ENCODE measurements at regions of chr1 and their contacts with region 1.

Region 1: GRCh38 chr1:116737020-116737854 is 17.0 kb upstream of the CD2 start:
- DNase-seq: peak; percentile 82 to 85 (median 83)
- H3K4me3 ChIP-seq: peak overlapping the region in 1 of 2 donors; percentile 44
- H3K4me3 Mint-ChIP-seq: peak overlapping the region; percentile 50 to 80 (median 74)
- H3K27ac ChIP-seq: peak overlapping the region; percentile 97
- H3K27ac Mint-ChIP-seq: peak overlapping the region; percentile 97 to 100 (median 99)
- H3K4me1 ChIP-seq: peaks cover 49% of the 10 kb centered on the region
- H3K4me1 Mint-ChIP-seq: peaks cover 41 to 55% (median 46%) of the 10 kb centered on the region in 4 donors
- H3K27me3 ChIP-seq: no peaks in the 10 kb centered on the region
- H3K27me3 Mint-ChIP-seq: no peaks in the 10 kb centered on the region

Region 2: DNA sequence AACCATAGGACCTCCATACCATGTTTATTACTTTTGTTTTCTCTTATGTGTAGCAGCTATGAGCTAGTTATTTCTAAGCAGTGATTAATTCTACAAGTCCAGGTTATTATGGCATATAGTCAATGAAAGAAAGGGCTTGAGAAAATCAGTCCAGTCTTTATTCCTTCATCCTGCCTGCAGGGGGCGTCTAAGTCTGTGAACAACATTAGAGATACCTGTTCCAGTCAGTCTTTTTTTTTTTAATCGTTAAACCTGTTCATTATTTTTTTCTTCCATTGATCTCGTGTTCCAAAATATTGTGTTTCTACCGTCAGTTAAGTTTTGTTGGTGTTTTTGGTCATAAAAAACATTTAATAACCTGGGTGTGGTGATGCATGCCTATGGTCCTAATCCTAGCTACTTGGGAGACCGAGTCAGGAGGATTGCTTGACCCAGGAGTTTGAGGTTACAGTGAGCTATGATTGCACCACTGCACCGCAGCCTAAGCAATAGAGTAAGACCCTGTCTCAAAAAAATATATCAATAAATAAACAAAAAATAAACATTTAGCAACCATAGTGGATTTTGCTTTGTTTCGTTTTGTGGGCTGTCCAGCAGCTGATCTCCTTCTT is 12.4 kb before region 1 on chr1:
- CTCF ChIA-PET with region 1: interaction called, 46 read pairs
- POLR2A ChIA-PET with region 1: interaction called, 7 read pairs
- intact Hi-C with region 1: loop called (anchors 1 kb)
- DNase-seq: peak; percentile 67 to 81 (median 73)
- H3K4me3 ChIP-seq: no peak overlapping the region
- H3K4me3 Mint-ChIP-seq: no peak overlapping the region
- H3K27ac ChIP-seq: no peak overlapping the region
- H3K27ac Mint-ChIP-seq: peak overlapping the region in 3 of 7 donors; percentile 1 to 47 (median 39)
- H3K4me1 ChIP-seq: peaks cover 13% of the 10 kb centered on the region
- H3K4me1 Mint-ChIP-seq: peaks cover 6 to 27% (median 12%) of the 10 kb centered on the region in 4 donors
- H3K27me3 ChIP-seq: no peaks in the 10 kb centered on the region
- H3K27me3 Mint-ChIP-seq: no peaks in the 10 kb centered on the region

Region 3: GRCh38 chr1:116763787-116764465 is 26.7 kb after region 1 on chr1:
- CTCF ChIA-PET with region 1: interaction called, 170 read pairs
- POLR2A ChIA-PET with region 1: interaction called, 1,832 read pairs
- intact Hi-C with region 1: loop called (anchors 1 kb)
- DNase-seq: peak in 3 of 5 donors; percentile 39 to 80 (median 43)
- H3K4me3 ChIP-seq: peak overlapping the region; percentile 10 to 27
- H3K4me3 Mint-ChIP-seq: peak overlapping the region; percentile 76 to 94 (median 84)
- H3K27ac ChIP-seq: peak overlapping the region; percentile 88
- H3K27ac Mint-ChIP-seq: peak overlapping the region; percentile 97 to 99 (median 98)
- H3K4me1 ChIP-seq: peaks cover 97% of the 10 kb centered on the region
- H3K4me1 Mint-ChIP-seq: peaks cover 79 to 100% (median 88%) of the 10 kb centered on the region in 4 donors
- H3K27me3 ChIP-seq: no peaks in the 10 kb centered on the region
- H3K27me3 Mint-ChIP-seq: no peaks in the 10 kb centered on the region

Region 4: DNA sequence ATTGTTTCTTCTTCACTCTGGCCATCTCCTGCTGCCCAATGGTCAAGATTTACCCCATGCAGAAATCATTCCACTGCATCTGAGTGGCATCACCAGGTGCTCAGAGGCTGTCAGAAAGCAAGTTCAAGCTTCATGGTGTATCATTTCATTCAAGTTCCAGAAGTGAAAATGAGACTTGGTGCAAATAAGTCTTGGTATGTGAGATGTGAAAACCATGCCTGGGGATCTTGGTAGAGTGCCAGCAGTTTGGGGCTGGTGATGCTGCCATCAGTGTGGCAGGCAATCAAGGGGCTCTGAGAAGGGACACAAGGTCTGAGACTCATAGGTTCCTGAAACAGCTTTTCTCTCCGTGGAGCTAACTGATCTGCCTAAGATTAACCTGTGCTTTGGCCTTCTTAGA is 69.0 kb after region 1 on chr1:
- CTCF ChIA-PET with region 1: interaction called, 27 read pairs
- POLR2A ChIA-PET with region 1: interaction called, 170 read pairs
- intact Hi-C with region 1: loop called (anchors 2 kb)
- DNase-seq: peak in 4 of 5 donors; percentile 57 to 79 (median 58)
- H3K4me3 ChIP-seq: peak overlapping the region in 1 of 2 donors; percentile 29
- H3K4me3 Mint-ChIP-seq: peak overlapping the region; percentile 67 to 96 (median 85)
- H3K27ac ChIP-seq: peak overlapping the region; percentile 80
- H3K27ac Mint-ChIP-seq: peak overlapping the region; percentile 89 to 99 (median 98)
- H3K4me1 ChIP-seq: peaks cover 97% of the 10 kb centered on the region
- H3K4me1 Mint-ChIP-seq: peaks cover 78 to 97% (median 84%) of the 10 kb centered on the region in 4 donors
- H3K27me3 ChIP-seq: no peaks in the 10 kb centered on the region
- H3K27me3 Mint-ChIP-seq: no peaks in the 10 kb centered on the region

Region 5: DNA sequence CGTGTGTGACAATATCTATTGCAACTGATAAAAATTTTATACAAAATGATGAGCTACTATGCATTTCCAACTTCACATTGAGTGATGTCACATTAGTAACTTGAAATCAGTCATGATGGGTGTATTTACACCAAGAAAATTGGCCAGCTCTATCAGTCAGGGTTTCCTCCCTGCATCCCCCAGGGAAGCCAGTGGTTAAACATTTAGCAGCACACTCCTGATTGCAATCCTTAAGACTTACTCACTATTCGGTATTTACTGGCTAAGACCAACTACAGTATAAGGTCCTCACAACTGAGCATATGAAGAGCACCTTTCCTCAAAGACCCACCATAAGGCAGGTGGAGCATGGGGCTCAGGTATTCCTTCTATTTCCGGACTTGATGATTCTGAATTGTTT is 131.1 kb after region 1 on chr1:
- CTCF ChIA-PET with region 1: no interaction called
- POLR2A ChIA-PET with region 1: no interaction called
- intact Hi-C with region 1: no loop called
- DNase-seq: no peak
- H3K4me3 ChIP-seq: no peak overlapping the region
- H3K4me3 Mint-ChIP-seq: no peak overlapping the region
- H3K27ac ChIP-seq: no peak overlapping the region
- H3K27ac Mint-ChIP-seq: no peak overlapping the region
- H3K4me1 ChIP-seq: no peaks in the 10 kb centered on the region
- H3K4me1 Mint-ChIP-seq: peaks cover 0 to 3% (median under 1%) of the 10 kb centered on the region in 4 donors
- H3K27me3 ChIP-seq: no peaks in the 10 kb centered on the region
- H3K27me3 Mint-ChIP-seq: peaks cover 0 to 5% of the 10 kb centered on the region in 2 donors

Region 6: GRCh38 chr1:116881879-116882520 is 144.8 kb after region 1 on chr1:
- CTCF ChIA-PET with region 1: interaction called, 23 read pairs
- POLR2A ChIA-PET with region 1: interaction called, 30 read pairs
- intact Hi-C with region 1: loop called (anchors 1 kb)
- DNase-seq: peak in 2 of 5 donors; percentile 5 to 20
- H3K4me3 ChIP-seq: no peak overlapping the region
- H3K4me3 Mint-ChIP-seq: no peak overlapping the region
- H3K27ac ChIP-seq: no peak overlapping the region
- H3K27ac Mint-ChIP-seq: peak overlapping the region in 1 of 7 donors; percentile 28
- H3K4me1 ChIP-seq: peaks cover 28% of the 10 kb centered on the region
- H3K4me1 Mint-ChIP-seq: peaks cover 0 to 5% (median 2%) of the 10 kb centered on the region in 4 donors
- H3K27me3 ChIP-seq: no peaks in the 10 kb centered on the region
- H3K27me3 Mint-ChIP-seq: no peaks in the 10 kb centered on the region

Measured in CD4-positive, alpha-beta memory T cell (primary cell).